ENCODE measurements at regions of chr20 and their contacts with region 1.

Region 1: GRCh38 chr20:47620808-47621805 is 119.4 kb downstream of the NCOA3 start:
- DNase-seq: peak; percentile 83
- H3K4me3 ChIP-seq: no peak overlapping the region
- H3K27ac ChIP-seq: no peak overlapping the region
- H3K4me1 ChIP-seq: peaks cover 3% of the 10 kb centered on the region
- H3K27me3 ChIP-seq: no peaks in the 10 kb centered on the region
- CTCF ChIP-seq: peak; percentile 49 to 55
- POLR2A ChIP-seq: no peak

Region 2: DNA sequence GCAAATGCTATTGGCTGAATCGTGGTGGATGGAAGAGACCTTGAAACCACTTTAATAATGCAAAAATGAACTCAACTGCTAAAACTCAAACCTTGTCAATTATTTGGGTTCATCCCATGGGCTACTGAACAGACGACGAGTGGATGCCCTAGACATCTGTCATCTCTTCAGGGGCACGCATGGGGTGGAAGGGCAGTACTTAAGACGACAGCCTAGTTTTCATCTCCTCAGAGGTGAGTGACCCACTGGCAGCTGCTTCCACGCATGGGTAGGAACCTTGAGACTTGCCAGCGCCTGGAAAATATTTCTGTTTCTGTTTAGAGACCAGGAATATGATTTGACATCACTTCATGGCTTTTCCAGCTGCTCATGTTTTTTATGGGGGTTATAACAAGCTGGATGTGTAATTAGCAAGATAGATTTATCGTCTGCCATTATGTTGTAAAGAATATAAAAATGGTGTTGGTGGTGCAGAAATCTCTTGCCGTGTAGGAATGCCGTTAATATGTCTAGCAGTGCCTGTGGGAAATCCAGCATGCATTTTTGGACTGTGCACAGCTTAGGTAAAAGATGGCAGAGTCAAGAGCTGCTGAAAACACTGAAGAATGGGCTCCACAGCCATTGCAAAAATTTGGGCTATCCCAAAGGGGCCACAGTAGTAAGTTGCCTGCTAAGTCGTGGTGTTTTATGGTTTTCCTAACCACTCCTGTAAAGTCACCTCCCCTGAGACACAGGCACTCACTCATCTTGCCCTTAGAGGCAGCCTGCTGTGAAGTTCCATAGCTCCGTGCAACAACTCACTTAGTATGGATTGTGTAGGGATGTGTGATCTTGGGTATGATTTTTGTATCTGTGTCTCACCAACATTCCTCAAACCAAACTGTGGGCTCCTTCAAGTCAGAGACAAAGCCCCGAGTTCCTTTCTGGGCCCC is 523.1 kb before region 1 on chr20:
- CTCF ChIA-PET with region 1: no interaction called
- POLR2A ChIA-PET with region 1: no interaction called
- dilution Hi-C with region 1: no loop called
- intact Hi-C with region 1: no loop called
- DNase-seq: no peak
- H3K4me3 ChIP-seq: no peak overlapping the region
- H3K27ac ChIP-seq: no peak overlapping the region
- H3K4me1 ChIP-seq: no peaks in the 10 kb centered on the region
- H3K27me3 ChIP-seq: no peaks in the 10 kb centered on the region
- CTCF ChIP-seq: no peak
- POLR2A ChIP-seq: no peak

Region 3: GRCh38 chr20:47196091-47197081 is 424.7 kb before region 1 on chr20:
- CTCF ChIA-PET with region 1: interaction called, 67 read pairs
- POLR2A ChIA-PET with region 1: no interaction called
- dilution Hi-C with region 1: no loop called
- intact Hi-C with region 1: loop called (anchors 1 kb)
- DNase-seq: peak; percentile 63
- H3K4me3 ChIP-seq: no peak overlapping the region
- H3K27ac ChIP-seq: no peak overlapping the region
- H3K4me1 ChIP-seq: peaks cover 3% of the 10 kb centered on the region
- H3K27me3 ChIP-seq: peaks cover 0 to 2% of the 10 kb centered on the region in 2 experiments
- CTCF ChIP-seq: peak; percentile 95 to 98
- POLR2A ChIP-seq: no peak

Region 4: GRCh38 chr20:47304287-47304686 is 316.8 kb before region 1 on chr20:
- CTCF ChIA-PET with region 1: interaction called, 11 read pairs
- POLR2A ChIA-PET with region 1: no interaction called
- dilution Hi-C with region 1: no loop called
- intact Hi-C with region 1: no loop called
- DNase-seq: peak; percentile 57
- H3K4me3 ChIP-seq: no peak overlapping the region
- H3K27ac ChIP-seq: peak overlapping the region; percentile 19
- H3K4me1 ChIP-seq: peaks cover 20% of the 10 kb centered on the region
- H3K27me3 ChIP-seq: no peaks in the 10 kb centered on the region
- CTCF ChIP-seq: peak in 1 of 2 donors; percentile 5
- POLR2A ChIP-seq: no peak

Region 5: GRCh38 chr20:47493175-47493962 is 127.7 kb before region 1 on chr20:
- CTCF ChIA-PET with region 1: interaction called, 20 read pairs
- POLR2A ChIA-PET with region 1: no interaction called
- dilution Hi-C with region 1: no loop called
- intact Hi-C with region 1: no loop called
- DNase-seq: peak; percentile 49
- H3K4me3 ChIP-seq: no peak overlapping the region
- H3K27ac ChIP-seq: no peak overlapping the region
- H3K4me1 ChIP-seq: peaks cover 7% of the 10 kb centered on the region
- H3K27me3 ChIP-seq: no peaks in the 10 kb centered on the region
- CTCF ChIP-seq: no peak
- POLR2A ChIP-seq: no peak

Region 6: GRCh38 chr20:47568001-47568407 is 53.1 kb before region 1 on chr20:
- CTCF ChIA-PET with region 1: interaction called, 20 read pairs
- POLR2A ChIA-PET with region 1: no interaction called
- dilution Hi-C with region 1: no loop called
- intact Hi-C with region 1: no loop called
- DNase-seq: peak; percentile 93
- H3K4me3 ChIP-seq: no peak overlapping the region
- H3K27ac ChIP-seq: peak overlapping the region; percentile 42
- H3K4me1 ChIP-seq: peaks cover 16% of the 10 kb centered on the region
- H3K27me3 ChIP-seq: no peaks in the 10 kb centered on the region
- CTCF ChIP-seq: no peak
- POLR2A ChIP-seq: no peak

Measured in endothelial cell of umbilical vein (primary cell).